Cardiac septum (tissue), 1 donor: ENCODE measurements at regions of chr16 and their contacts with region 1.

Region 1: GRCh38 chr16:10181196-10182162 is 749 bp downstream of the GRIN2A start:
- DNase-seq: no peak

Region 2: DNA sequence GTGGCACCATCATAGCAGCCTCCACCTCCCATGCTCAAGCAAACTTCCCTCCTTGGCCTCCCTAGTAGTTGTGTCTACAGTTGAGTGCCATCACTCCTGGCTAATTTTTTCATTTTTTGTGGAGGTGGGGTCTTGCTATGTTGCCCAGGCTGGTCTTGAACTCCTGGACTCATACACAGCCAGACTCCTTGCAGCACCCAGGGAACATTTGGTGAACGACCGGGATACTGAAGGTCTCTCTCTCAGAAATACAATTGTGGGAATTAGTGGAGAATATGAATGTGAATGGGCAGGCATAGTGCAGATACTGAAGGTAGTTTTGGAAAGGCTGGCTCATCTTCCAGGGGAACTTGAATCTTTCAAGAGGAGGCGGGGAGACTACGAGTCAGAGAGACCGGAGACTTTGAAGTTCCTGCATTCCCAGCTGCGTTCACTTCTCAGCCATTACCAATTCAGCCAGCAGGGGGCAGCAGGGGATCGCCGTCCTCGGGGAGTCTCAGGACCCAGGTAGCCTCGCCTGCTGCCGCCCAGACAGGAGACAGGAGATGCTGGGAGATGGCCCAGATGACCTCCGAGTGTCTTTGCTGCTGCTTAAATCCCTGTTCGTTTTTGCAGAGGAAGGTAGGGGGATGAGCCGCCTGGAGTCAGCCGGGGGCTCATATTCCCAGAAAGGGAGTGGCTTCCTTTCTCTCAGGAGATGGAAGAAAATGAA is 1021.5 kb before region 1 on chr16:
- intact Hi-C with region 1: loop called (anchors 2 kb)
- DNase-seq: peak; percentile 82

Region 3: DNA sequence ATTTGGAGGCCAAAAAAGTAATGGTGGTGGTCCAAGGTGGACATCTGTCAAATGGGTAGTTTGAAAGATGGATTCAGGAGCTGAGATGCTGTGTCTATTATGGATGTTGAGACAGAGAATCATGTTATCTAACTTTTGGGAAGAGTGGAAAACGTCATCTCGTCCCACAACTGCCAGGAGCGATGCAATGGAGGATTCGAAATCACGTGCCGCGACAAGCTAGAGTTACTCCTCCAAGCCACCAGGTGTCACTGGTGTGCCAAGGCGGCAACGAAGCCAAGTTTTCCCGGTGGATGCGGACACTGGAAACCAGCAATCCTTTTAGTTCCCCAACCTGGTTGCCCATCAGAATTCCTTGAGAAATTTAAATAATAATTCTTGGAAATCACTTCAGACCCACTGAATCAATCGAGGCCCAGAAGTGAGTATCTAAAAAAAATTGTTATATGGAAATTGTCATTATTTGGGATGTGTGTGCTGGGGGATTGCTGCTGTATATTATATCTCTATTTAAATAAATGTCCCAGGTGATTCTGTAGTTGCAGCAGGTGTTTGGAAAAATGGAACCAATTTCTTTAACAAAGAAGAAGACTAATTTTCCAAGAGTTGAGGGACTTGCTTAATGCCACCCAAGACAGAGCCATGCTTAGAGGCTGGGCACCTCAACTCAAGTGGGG is 883.9 kb before region 1 on chr16:
- intact Hi-C with region 1: loop called (anchors 5 kb)
- DNase-seq: no peak

Region 4: GRCh38 chr16:9647981-9648712 is 533.3 kb before region 1 on chr16:
- intact Hi-C with region 1: loop called (anchors 5 kb)
- DNase-seq: no peak

Region 5: GRCh38 chr16:10039220-10040096 is 142.0 kb before region 1 on chr16:
- intact Hi-C with region 1: loop called (anchors 10 kb)
- DNase-seq: no peak

Region 6: DNA sequence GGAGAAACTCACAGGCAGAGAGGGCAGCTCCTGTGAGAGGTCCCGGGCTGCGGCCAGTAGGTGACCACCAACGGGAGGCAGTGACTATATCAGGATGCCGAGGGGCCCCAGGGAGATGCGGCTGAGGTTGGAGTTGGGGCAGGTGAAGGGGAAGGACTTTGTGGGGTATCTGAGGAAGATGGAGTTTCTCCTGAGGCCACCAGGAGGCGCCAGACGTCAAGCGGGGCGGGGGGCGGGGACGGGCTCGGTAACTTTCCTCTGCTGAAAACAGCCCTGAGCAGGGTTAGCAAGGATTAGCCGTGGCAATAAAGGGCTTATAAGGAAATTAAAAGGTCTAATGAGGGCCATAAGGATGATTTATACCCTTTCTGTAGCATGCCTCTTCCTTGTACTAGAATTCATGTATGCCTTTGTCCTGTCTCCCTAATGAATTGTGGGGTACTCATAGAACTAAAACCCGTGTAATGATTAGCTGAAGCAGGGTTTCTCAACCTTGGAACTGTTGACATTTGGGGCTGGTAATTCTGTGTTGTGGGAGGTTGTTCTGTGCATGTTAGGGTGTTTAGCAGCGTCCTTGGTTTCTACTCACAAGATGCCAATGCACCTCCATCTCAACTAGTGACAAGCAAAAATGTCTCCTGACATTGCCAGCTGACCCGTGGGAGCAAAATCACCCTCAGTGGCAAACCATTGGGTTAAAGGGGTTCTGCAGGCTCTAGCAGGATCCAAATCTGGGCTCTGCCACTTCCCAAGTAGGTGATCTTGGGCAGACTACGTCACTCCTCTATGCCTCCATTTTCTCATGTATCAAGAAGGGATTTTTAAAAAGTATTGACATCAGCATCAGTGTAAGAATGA is 75.5 kb after region 1 on chr16:
- intact Hi-C with region 1: no loop called
- DNase-seq: no peak